ENCODE measurements at regions of chr10 and their contacts with region 1.

Region 1: GRCh38 chr10:131885391-131886161 is 15.2 kb upstream of the PPP2R2D start:
- DNase-seq: peak; percentile 80
- H3K4me3 Mint-ChIP-seq: no peak overlapping the region
- H3K27ac Mint-ChIP-seq: no peak overlapping the region
- H3K4me1 Mint-ChIP-seq: peaks cover 6% of the 10 kb centered on the region
- H3K27me3 Mint-ChIP-seq: no peaks in the 10 kb centered on the region
- CTCF ChIP-seq: peak; percentile 97

Region 2: DNA sequence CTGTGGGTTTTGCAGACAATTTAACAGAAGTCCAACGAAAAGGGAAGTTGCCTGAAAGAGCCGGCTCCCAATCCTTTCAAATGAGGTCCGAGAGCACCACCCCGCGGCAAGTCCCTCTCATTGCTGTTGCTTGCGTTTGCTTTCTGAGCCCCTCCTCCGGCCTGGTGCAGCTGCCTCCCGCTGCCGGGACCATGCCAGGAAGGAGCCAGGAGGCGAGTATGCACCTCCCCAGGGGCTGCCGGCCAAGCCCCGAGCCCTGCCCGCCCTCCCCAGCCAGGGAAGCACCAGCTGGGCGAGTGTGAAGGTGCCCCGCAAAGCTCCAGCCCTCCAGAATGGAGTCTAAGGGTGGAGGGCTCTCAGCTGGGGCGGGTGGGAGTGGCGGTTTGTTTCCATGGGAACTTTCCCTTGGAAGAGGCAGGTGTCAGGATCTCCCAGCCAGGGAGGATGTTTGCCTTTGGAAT is 10.6 kb before region 1 on chr10:
- CTCF ChIA-PET with region 1: interaction called, 10 read pairs
- POLR2A ChIA-PET with region 1: no interaction called
- intact Hi-C with region 1: no loop called
- DNase-seq: peak; percentile 80
- H3K4me3 Mint-ChIP-seq: no peak overlapping the region
- H3K27ac Mint-ChIP-seq: no peak overlapping the region
- H3K4me1 Mint-ChIP-seq: no peaks in the 10 kb centered on the region
- H3K27me3 Mint-ChIP-seq: peaks cover 40% of the 10 kb centered on the region
- CTCF ChIP-seq: peak; percentile 80

Region 3: GRCh38 chr10:131900350-131901146 is 15.0 kb after region 1 on chr10 and contains the start of gene PPP2R2D:
- CTCF ChIA-PET with region 1: interaction called, 28 read pairs
- POLR2A ChIA-PET with region 1: interaction called, 20 read pairs
- intact Hi-C with region 1: no loop called
- DNase-seq: peak; percentile 93
- H3K4me3 Mint-ChIP-seq: peak within 1 kb of the TSS; percentile 84
- H3K27ac Mint-ChIP-seq: peak within 1 kb of the TSS; percentile 85
- H3K4me1 Mint-ChIP-seq: peaks cover 22% of the 10 kb centered on the region
- H3K27me3 Mint-ChIP-seq: peaks cover 18% of the 10 kb centered on the region
- CTCF ChIP-seq: no peak
- total RNA-seq, gene PPP2R2D: 34.9 and 35.5 TPM in 2 replicates

Region 4: GRCh38 chr10:131925011-131925649 is 39.6 kb after region 1 on chr10:
- CTCF ChIA-PET with region 1: interaction called, 10 read pairs
- POLR2A ChIA-PET with region 1: no interaction called
- intact Hi-C with region 1: no loop called
- DNase-seq: no peak
- H3K4me3 Mint-ChIP-seq: no peak overlapping the region
- H3K27ac Mint-ChIP-seq: no peak overlapping the region
- H3K4me1 Mint-ChIP-seq: peaks cover 31% of the 10 kb centered on the region
- H3K27me3 Mint-ChIP-seq: no peaks in the 10 kb centered on the region
- CTCF ChIP-seq: no peak

Region 5: DNA sequence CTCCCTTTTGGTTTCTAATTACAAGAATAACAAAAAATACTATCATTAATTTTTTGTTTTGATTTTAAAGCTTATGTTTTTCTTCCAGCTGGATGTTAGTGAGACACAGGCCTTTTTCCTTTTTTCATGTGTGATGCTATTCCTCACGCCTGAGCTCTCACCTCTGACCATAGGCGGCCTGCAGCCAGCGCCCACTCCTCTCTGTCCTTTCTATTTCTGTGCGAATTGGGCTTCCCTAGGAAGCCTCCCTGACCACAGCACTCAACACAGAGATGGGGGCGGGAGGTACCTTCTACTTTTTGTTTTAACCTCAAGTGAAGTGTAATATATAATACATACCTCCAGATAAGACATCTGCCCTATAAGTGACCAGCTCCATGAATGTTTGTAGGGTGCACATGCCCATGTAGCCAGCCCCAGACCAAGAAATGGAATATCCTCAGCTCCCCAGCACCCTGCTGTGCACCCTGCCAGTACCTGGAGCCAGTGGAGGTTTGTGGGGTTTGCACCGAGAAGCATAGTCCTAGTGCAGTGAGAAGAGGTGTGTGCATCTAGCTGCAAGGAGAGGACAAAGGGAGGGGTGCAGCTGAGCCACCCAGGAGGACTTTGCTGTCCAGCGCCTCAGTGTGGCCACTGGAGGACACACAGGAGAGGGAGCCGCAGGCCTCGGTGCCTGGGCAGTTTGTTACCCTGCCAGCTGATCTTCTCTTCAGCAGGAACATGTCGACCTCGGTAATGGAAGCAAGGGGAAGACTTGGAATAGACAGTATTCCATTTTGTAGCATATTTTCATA is 57.6 kb after region 1 on chr10:
- CTCF ChIA-PET with region 1: interaction called, 24 read pairs
- POLR2A ChIA-PET with region 1: interaction called, 4 read pairs
- intact Hi-C with region 1: loop called (anchors 2 kb)
- DNase-seq: peak; percentile 22
- H3K4me3 Mint-ChIP-seq: no peak overlapping the region
- H3K27ac Mint-ChIP-seq: no peak overlapping the region
- H3K4me1 Mint-ChIP-seq: peaks cover 23% of the 10 kb centered on the region
- H3K27me3 Mint-ChIP-seq: no peaks in the 10 kb centered on the region
- CTCF ChIP-seq: no peak

Region 6: GRCh38 chr10:131981429-131982184 is 96.0 kb after region 1 on chr10 and contains the start of gene BNIP3:
- CTCF ChIA-PET with region 1: interaction called, 8 read pairs
- POLR2A ChIA-PET with region 1: interaction called, 6 read pairs
- intact Hi-C with region 1: loop called (anchors 5 kb)
- DNase-seq: peak; percentile 91
- H3K4me3 Mint-ChIP-seq: peak within 1 kb of the TSS; percentile 82
- H3K27ac Mint-ChIP-seq: peak within 1 kb of the TSS; percentile 75
- H3K4me1 Mint-ChIP-seq: peaks cover 18% of the 10 kb centered on the region
- H3K27me3 Mint-ChIP-seq: no peaks in the 10 kb centered on the region
- CTCF ChIP-seq: no peak
- total RNA-seq, gene BNIP3: 47.0 and 53.0 TPM in 2 replicates

Region 7: GRCh38 chr10:132142411-132143161 is 257.0 kb after region 1 on chr10:
- CTCF ChIA-PET with region 1: interaction called, 20 read pairs
- POLR2A ChIA-PET with region 1: no interaction called
- intact Hi-C with region 1: loop called (anchors 1 kb)
- DNase-seq: peak; percentile 36
- H3K4me3 Mint-ChIP-seq: no peak overlapping the region
- H3K27ac Mint-ChIP-seq: no peak overlapping the region
- H3K4me1 Mint-ChIP-seq: no peaks in the 10 kb centered on the region
- H3K27me3 Mint-ChIP-seq: no peaks in the 10 kb centered on the region
- CTCF ChIP-seq: peak; percentile 97